ENCODE measurements at regions of chr18 and their contacts with region 1.

Region 1: DNA sequence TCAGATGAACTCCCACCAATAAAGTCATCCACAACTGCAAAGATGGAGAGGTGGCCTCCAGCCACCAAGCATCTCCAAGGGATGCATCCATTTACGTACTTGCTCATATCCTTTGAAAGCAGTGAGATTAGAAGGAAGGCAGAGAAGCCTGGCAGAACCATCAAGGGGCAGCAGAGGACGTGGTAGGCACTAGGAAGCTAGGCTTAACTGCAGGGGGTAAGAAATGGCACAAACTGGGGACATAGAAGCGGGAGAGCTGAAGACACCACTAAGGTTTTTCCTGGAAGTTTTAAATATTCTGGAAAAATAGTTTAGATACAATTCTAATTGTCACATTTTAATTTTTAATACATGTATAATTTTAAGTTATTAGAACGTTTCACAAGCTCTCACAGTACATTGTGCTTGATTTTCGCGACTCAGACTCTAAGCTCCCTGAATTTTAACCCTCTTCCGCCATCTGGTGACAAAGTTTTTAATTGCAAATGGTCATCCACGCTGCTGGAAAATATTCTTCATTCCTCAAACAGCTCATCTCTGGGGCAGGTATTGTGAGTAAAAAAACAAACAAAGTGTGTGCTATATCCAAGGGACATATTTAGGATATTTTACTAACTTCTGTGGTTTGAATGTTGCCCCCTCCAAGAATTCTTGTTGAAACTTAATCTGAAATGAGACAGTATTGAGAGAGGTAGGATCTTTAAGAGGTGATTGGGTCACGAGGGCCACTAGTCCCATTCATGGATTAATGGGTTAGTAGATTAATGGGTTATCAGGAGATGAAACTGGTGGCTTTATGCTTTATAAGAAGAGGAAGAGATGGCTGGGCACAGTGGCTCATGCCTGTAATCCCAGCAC is 1.6 kb upstream of the PSTPIP2 start:
- DNase-seq: peak; percentile 70
- ATAC-seq: peak; percentile 65
- H3K4me3 Mint-ChIP-seq: no peak overlapping the region
- H3K27ac Mint-ChIP-seq: peak overlapping the region; percentile 20
- H3K4me1 Mint-ChIP-seq: peaks cover 39% of the 10 kb centered on the region
- H3K27me3 Mint-ChIP-seq: no peaks in the 10 kb centered on the region
- CTCF ChIP-seq: peak; percentile 89

Region 2: GRCh38 chr18:45690975-45691815 is 382.5 kb before region 1 on chr18:
- CTCF ChIA-PET with region 1: interaction called, 11 read pairs
- POLR2A ChIA-PET with region 1: no interaction called
- intact Hi-C with region 1: loop called (anchors 5 kb)
- DNase-seq: peak; percentile 88
- ATAC-seq: no peak
- H3K4me3 Mint-ChIP-seq: no peak overlapping the region
- H3K27ac Mint-ChIP-seq: no peak overlapping the region
- H3K4me1 Mint-ChIP-seq: peaks cover 49% of the 10 kb centered on the region
- H3K27me3 Mint-ChIP-seq: no peaks in the 10 kb centered on the region
- CTCF ChIP-seq: peak; percentile 88

Region 3: GRCh38 chr18:45916302-45916701 is 157.4 kb before region 1 on chr18:
- CTCF ChIA-PET with region 1: interaction called, 13 read pairs
- POLR2A ChIA-PET with region 1: no interaction called
- intact Hi-C with region 1: no loop called
- DNase-seq: peak; percentile 27
- ATAC-seq: peak; percentile 60
- H3K4me3 Mint-ChIP-seq: no peak overlapping the region
- H3K27ac Mint-ChIP-seq: no peak overlapping the region
- H3K4me1 Mint-ChIP-seq: peaks cover 7% of the 10 kb centered on the region
- H3K27me3 Mint-ChIP-seq: no peaks in the 10 kb centered on the region
- CTCF ChIP-seq: peak; percentile 38

Region 4: GRCh38 chr18:45945669-45946068 is 128.0 kb before region 1 on chr18:
- CTCF ChIA-PET with region 1: interaction called, 18 read pairs
- POLR2A ChIA-PET with region 1: no interaction called
- intact Hi-C with region 1: no loop called
- DNase-seq: no peak
- ATAC-seq: no peak
- H3K4me3 Mint-ChIP-seq: no peak overlapping the region
- H3K27ac Mint-ChIP-seq: no peak overlapping the region
- H3K4me1 Mint-ChIP-seq: peaks cover 7% of the 10 kb centered on the region
- H3K27me3 Mint-ChIP-seq: no peaks in the 10 kb centered on the region
- CTCF ChIP-seq: no peak

Region 5: DNA sequence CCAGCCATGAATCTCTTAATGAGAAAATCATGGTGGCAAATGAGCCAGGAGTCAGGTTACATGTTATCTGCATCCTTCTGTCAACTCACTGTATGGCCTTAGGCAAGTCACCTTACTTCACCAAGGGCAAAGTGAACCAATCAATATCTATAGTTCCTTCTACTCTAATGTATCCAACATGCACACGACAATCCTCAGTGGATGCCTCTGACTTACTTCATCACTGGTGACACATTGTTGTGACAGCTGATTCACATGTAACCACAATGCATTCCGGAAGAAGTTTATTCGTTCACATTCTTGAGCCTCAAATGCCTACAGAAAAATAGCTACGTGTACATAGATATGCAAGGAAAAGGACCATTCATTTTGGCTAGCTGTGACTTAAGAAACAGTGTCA is 80.3 kb before region 1 on chr18:
- CTCF ChIA-PET with region 1: interaction called, 13 read pairs
- POLR2A ChIA-PET with region 1: interaction called, 4 read pairs
- intact Hi-C with region 1: no loop called
- DNase-seq: no peak
- ATAC-seq: no peak
- H3K4me3 Mint-ChIP-seq: no peak overlapping the region
- H3K27ac Mint-ChIP-seq: no peak overlapping the region
- H3K4me1 Mint-ChIP-seq: peaks cover 21% of the 10 kb centered on the region
- H3K27me3 Mint-ChIP-seq: no peaks in the 10 kb centered on the region
- CTCF ChIP-seq: no peak

Region 6: GRCh38 chr18:46042571-46043123 is 31.1 kb before region 1 on chr18:
- CTCF ChIA-PET with region 1: interaction called, 13 read pairs
- POLR2A ChIA-PET with region 1: interaction called, 3 read pairs
- intact Hi-C with region 1: no loop called
- DNase-seq: peak; percentile 64
- ATAC-seq: peak; percentile 83
- H3K4me3 Mint-ChIP-seq: peak overlapping the region; percentile 21
- H3K27ac Mint-ChIP-seq: peak overlapping the region; percentile 40
- H3K4me1 Mint-ChIP-seq: peaks cover 39% of the 10 kb centered on the region
- H3K27me3 Mint-ChIP-seq: no peaks in the 10 kb centered on the region
- CTCF ChIP-seq: no peak

Region 7: GRCh38 chr18:46184727-46185126 is 111.0 kb after region 1 on chr18:
- CTCF ChIA-PET with region 1: no interaction called
- POLR2A ChIA-PET with region 1: no interaction called
- intact Hi-C with region 1: no loop called
- DNase-seq: no peak
- ATAC-seq: no peak
- H3K4me3 Mint-ChIP-seq: no peak overlapping the region
- H3K27ac Mint-ChIP-seq: peak overlapping the region; percentile 42
- H3K4me1 Mint-ChIP-seq: peaks cover 54% of the 10 kb centered on the region
- H3K27me3 Mint-ChIP-seq: no peaks in the 10 kb centered on the region
- CTCF ChIP-seq: no peak

Region 8: GRCh38 chr18:46696268-46696667 is 622.6 kb after region 1 on chr18:
- CTCF ChIA-PET with region 1: no interaction called
- POLR2A ChIA-PET with region 1: no interaction called
- intact Hi-C with region 1: no loop called
- DNase-seq: no peak
- ATAC-seq: no peak
- H3K4me3 Mint-ChIP-seq: no peak overlapping the region
- H3K27ac Mint-ChIP-seq: no peak overlapping the region
- H3K4me1 Mint-ChIP-seq: no peaks in the 10 kb centered on the region
- H3K27me3 Mint-ChIP-seq: peaks cover 4% of the 10 kb centered on the region
- CTCF ChIP-seq: no peak